Activated naive CD4-positive, alpha-beta T cell treated with anti-CD3 and anti-CD28 coated beads, Interleukin-2, amount 10 ng/mL, durations not matched to agents 7 days and 5 days (primary cell): ENCODE measurements at regions of chr10 and their contacts with region 1.

Region 1: DNA sequence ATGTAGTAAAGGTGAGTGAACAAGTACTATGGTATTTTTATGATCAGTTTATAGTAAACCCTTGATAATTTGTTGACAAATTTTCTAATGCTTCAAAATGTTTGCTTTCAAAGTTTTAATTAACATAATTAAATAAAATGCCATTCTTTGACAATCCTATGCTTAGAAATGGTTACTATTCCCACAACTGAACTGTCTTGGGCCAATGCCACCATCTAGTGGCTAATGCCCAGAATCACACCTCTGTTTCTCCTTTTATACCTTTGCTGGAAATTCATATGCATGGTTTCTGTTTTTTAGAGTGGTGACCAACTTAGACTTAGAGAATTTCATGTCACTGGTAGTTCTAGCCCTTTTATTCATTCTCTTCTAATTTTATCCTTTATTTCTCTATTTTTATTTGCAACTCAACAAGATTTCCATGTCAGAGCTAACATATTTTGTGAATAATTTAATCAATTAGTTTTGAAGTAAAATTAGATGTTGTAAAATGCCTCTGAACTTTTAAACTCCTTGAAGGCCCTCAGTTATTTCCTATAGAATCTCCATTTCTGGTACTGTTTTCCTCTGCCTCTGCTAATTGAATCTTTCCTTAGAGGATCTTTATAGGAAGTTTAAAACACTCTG is 31.1 kb downstream of the PCGF5 start:
- DNase-seq: peak; percentile 66
- H3K4me3 Mint-ChIP-seq: no peak overlapping the region
- H3K27ac Mint-ChIP-seq: no peak overlapping the region
- H3K4me1 Mint-ChIP-seq: peaks cover 8% of the 10 kb centered on the region
- H3K27me3 Mint-ChIP-seq: no peaks in the 10 kb centered on the region

Region 2: GRCh38 chr10:90912174-90912573 is 339.4 kb before region 1 on chr10:
- CTCF ChIA-PET with region 1: interaction called, 49 read pairs
- DNase-seq: no peak
- H3K4me3 Mint-ChIP-seq: no peak overlapping the region
- H3K27ac Mint-ChIP-seq: no peak overlapping the region
- H3K4me1 Mint-ChIP-seq: peaks cover 6% of the 10 kb centered on the region
- H3K27me3 Mint-ChIP-seq: peaks cover 5% of the 10 kb centered on the region

Region 3: GRCh38 chr10:91088300-91089140 is 163.0 kb before region 1 on chr10:
- CTCF ChIA-PET with region 1: interaction called, 38 read pairs
- DNase-seq: no peak
- H3K4me3 Mint-ChIP-seq: no peak overlapping the region
- H3K27ac Mint-ChIP-seq: no peak overlapping the region
- H3K4me1 Mint-ChIP-seq: no peaks in the 10 kb centered on the region
- H3K27me3 Mint-ChIP-seq: peaks cover 3% of the 10 kb centered on the region

Region 4: GRCh38 chr10:91164520-91165065 is 87.0 kb before region 1 on chr10:
- CTCF ChIA-PET with region 1: interaction called, 10 read pairs
- DNase-seq: no peak
- H3K4me3 Mint-ChIP-seq: peak overlapping the region; percentile 87
- H3K27ac Mint-ChIP-seq: peak overlapping the region; percentile 88
- H3K4me1 Mint-ChIP-seq: peaks cover 25% of the 10 kb centered on the region
- H3K27me3 Mint-ChIP-seq: peaks cover 14% of the 10 kb centered on the region

Region 5: GRCh38 chr10:91487911-91488582 is 236.5 kb after region 1 on chr10:
- CTCF ChIA-PET with region 1: no interaction called
- DNase-seq: no peak
- H3K4me3 Mint-ChIP-seq: no peak overlapping the region
- H3K27ac Mint-ChIP-seq: no peak overlapping the region
- H3K4me1 Mint-ChIP-seq: no peaks in the 10 kb centered on the region
- H3K27me3 Mint-ChIP-seq: no peaks in the 10 kb centered on the region

Region 6: DNA sequence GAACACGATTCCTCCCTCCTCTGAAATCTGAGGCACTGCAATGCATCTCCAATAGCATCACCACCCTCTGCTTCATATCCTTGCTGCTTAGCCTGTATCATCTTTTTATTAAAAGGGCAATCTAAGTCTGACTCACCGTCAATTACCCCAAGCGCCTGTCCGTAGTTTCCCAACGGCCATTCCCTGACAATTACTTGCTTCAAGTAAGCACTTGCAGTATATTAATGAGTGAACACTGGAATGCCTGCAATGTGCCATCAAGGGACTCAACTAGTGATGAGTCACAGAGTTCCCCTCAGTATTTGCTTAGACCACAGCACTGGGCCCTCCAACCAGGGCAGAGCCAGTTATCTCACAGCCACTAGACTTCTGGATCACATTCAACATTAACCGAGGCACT is 400.8 kb after region 1 on chr10:
- CTCF ChIA-PET with region 1: no interaction called
- DNase-seq: no peak
- H3K4me3 Mint-ChIP-seq: no peak overlapping the region
- H3K27ac Mint-ChIP-seq: no peak overlapping the region
- H3K4me1 Mint-ChIP-seq: no peaks in the 10 kb centered on the region
- H3K27me3 Mint-ChIP-seq: peaks cover 3% of the 10 kb centered on the region